H1 (cell line): ENCODE measurements at regions of chr2 and their contacts with region 1.

Region 1: DNA sequence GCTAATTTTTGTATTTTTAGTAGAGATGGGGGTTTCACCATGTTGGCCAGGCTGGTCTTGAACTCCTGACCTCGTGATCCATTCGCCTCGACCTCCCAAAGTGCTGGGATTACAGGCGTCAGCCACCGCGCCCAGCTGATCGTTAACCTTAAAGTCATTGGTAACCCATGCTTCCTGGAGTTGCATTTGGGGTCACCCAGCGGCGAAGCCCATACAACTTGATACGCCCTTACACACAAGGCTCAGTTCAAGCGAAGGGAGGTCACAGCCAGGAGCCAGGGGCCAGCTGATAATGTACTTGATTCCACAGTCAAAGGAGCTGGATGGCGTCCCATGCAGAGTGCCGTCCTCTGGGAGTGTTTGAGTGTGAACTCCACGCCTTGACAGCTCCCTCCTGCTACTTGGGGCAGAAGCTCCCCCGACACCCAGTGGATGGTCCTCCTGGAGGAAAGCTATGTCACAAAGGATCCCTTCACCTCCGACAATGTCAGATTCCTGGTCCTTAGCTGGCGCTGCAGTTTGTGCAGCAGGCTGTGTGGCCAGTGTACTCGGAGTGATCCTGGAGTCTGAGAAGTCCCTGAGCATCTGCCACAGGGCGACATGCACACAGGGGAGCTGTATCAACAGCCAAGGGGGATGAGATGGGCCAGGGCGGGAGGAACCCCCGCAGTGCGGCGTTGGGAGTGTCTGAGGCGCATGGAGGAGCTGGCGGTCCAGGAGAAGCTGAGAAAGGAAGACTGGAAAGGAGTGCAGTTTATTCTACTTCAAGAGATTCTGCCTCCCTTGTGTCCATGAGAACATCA is 7.9 kb downstream of the CLHC1 start:
- DNase-seq: no peak
- H3K4me3 ChIP-seq: peak overlapping the region in 2 of 4 experiments; percentile 89; a peak in 5 of 8 replicates
- H3K27ac ChIP-seq: no peak overlapping the region
- H3K4me1 ChIP-seq: peaks cover 0 to 4% (median 3%) of the 10 kb centered on the region in 4 experiments; a peak in 4 of 7 replicates
- H3K27me3 ChIP-seq: no peaks in the 10 kb centered on the region
- CTCF ChIP-seq: no peak
- EP300 ChIP-seq: no peak
- POLR2A ChIP-seq: no peak
- RAD21 ChIP-seq: no peak

Region 2: DNA sequence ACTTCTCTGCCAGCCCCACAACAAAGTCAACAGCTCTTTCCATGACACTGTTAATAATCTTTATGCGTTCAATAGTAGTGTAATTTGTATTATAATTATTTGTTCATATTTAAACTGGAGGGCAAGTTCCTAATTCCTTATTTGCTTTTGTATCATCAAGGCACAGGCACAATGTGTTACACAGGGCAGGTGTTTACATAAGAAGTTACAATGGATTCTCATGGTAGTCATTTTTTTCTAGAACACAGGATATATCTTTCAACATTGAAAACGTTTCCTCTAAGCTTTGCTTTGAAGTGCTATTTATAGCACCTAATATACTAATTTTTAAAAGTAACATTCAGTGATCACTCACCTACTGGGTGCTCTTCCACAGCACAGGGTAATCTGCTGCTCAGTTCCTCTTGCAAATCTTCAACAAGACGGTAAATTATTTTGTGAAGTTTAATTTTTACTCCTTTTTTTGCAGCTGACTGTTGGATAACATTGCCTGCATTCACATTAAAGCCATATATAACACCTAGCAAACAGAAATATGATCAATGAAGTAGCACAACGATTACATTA is 15.6 kb after region 1 on chr2:
- CTCF ChIA-PET with region 1: interaction called, 3 read pairs
- POLR2A ChIA-PET with region 1: interaction called, 20 read pairs
- DNase-seq: no peak
- H3K4me3 ChIP-seq: no peak overlapping the region
- H3K27ac ChIP-seq: no peak overlapping the region
- H3K4me1 ChIP-seq: no peaks in the 10 kb centered on the region
- H3K27me3 ChIP-seq: no peaks in the 10 kb centered on the region
- CTCF ChIP-seq: no peak
- EP300 ChIP-seq: no peak
- POLR2A ChIP-seq: no peak
- RAD21 ChIP-seq: no peak

Region 3: GRCh38 chr2:55460562-55460961 is 236.4 kb after region 1 on chr2:
- CTCF ChIA-PET with region 1: no interaction called
- POLR2A ChIA-PET with region 1: no interaction called
- DNase-seq: no peak
- H3K4me3 ChIP-seq: no peak overlapping the region
- H3K27ac ChIP-seq: no peak overlapping the region
- H3K4me1 ChIP-seq: no peaks in the 10 kb centered on the region
- H3K27me3 ChIP-seq: no peaks in the 10 kb centered on the region
- CTCF ChIP-seq: no peak
- EP300 ChIP-seq: no peak
- POLR2A ChIP-seq: no peak
- RAD21 ChIP-seq: no peak